Pancreas (tissue), 10 donors: ENCODE measurements at regions of chr10 and their contacts with region 1.

Region 1: GRCh38 chr10:89251409-89252224 is at the start of gene LIPA:
- DNase-seq: peak; percentile 92 to 97 (median 96)
- ATAC-seq: peak; percentile 98 to 99 (median 98)
- H3K4me3 ChIP-seq: peak within 1 kb of the TSS; percentile 84 to 94 (median 88)
- H3K27ac ChIP-seq: peak within 1 kb of the TSS; percentile 52 to 81 (median 70)
- H3K4me1 ChIP-seq: peaks cover 0 to 7% (median 0%) of the 10 kb centered on the region in 3 donors
- H3K27me3 ChIP-seq: no peaks in the 10 kb centered on the region
- CTCF ChIP-seq: no peak
- total RNA-seq, gene LIPA: 11.7 to 52.6 (median 17.6) TPM

Region 2: DNA sequence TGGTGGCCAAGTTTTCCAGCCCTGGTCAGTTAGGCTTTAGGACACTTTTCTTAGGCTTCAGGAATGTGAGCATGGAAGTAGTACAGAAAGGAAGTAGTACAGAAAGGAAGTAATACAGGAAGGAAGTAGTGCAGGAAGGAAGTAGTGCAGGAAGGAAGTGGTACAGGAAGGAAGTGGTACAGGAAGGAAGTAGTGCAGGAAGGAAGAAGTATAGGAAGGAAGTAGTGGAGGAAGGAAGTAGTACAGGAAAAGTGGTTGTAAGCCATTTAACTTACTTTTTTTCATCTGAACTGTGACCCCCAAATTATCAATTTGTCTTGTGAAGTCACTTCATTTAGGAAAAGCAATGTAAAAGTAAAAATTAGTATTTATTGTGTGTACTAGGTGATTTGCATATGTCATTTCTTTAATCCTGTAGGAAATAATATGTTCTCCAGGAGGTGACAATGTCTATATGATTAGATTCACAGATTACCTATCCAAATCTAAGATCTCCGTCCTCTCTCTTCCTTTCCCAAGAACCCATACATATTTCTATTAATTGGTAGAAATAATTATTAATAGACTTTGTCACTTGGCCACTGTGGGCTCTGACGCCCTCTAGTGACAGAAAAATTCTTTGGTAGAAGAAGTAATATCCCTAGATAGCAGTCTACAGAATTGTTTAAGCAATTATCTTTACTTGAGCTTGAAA is 264.9 kb before region 1 on chr10:
- intact Hi-C with region 1: no loop called
- DNase-seq: peak in 2 of 6 donors; percentile 19 to 24
- ATAC-seq: no peak
- H3K4me3 ChIP-seq: no peak overlapping the region
- H3K27ac ChIP-seq: no peak overlapping the region
- H3K4me1 ChIP-seq: no peaks in the 10 kb centered on the region
- H3K27me3 ChIP-seq: no peaks in the 10 kb centered on the region
- CTCF ChIP-seq: peak; percentile 41 to 60 (median 60)

Region 3: DNA sequence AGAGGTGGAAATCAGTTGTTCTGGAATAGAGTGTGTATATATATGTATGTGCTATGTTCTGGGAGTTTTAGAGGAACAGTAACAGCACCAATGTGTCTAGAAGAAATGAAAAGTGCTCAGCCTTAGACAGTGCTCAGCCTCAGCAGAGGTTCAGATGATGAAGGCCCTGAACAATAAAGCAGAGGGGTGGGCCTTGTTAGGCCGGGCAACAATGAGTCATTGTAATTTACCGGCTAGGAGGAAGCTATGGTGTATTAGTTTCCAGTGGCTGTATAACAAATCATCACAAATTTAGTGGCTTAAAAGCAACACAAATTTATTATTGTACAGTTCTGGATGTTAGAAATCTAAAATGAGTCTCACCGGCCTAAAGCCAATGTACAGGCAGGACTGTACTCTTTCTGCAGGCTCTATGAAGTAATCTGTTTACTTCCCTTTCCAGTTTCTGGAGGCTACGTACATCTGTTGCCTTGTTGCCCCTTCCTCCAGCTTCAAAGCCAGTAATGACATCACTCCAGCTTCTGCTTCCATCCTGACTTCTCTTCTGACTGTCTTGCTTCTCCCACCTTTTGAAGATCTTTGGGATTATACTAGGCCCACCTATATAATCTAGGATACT is 129.1 kb before region 1 on chr10:
- intact Hi-C with region 1: no loop called
- DNase-seq: no peak
- ATAC-seq: peak in 2 of 4 donors; percentile 82
- H3K4me3 ChIP-seq: no peak overlapping the region
- H3K27ac ChIP-seq: no peak overlapping the region
- H3K4me1 ChIP-seq: no peaks in the 10 kb centered on the region
- H3K27me3 ChIP-seq: no peaks in the 10 kb centered on the region
- CTCF ChIP-seq: no peak

Region 4: DNA sequence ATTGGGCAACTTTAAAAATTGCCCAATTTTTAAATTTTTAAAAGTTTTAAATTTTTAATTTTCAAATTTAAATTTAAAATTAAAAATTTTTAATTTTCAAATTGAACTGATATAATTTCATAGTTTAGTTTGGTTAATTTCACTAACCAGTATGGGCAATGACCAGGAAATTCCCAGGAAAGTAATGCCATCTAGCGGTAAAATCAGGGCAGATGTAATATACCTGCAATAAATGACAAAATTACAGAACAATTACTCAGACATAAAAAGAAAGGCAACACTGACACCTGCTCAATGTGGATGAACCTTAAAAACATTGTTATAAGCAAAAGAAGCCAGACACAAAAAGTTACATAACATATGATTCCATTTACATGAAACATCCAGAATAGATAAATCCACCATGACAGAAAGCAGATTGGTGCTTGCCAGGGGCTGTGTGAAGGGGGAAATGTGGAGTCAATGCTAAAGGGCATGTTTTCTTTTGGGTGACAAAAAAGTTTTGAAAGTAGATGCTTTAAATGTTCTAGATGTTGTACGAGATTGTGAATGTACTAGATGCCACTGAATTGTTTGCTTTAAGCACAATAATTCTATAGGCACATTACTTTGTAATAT is 312.4 kb after region 1 on chr10:
- intact Hi-C with region 1: loop called in 2 of 3 experiments (anchors 5 to 10 kb)
- DNase-seq: no peak
- ATAC-seq: peak; percentile 80 to 92 (median 88)
- H3K4me3 ChIP-seq: no peak overlapping the region
- H3K27ac ChIP-seq: no peak overlapping the region
- H3K4me1 ChIP-seq: no peaks in the 10 kb centered on the region
- H3K27me3 ChIP-seq: no peaks in the 10 kb centered on the region
- CTCF ChIP-seq: peak; percentile 28 to 53 (median 42)